ENCODE measurements at regions of chr1 and their contacts with region 1.

Region 1: GRCh38 chr1:61851849-61852669 is 109.8 kb downstream of the PATJ start:
- DNase-seq: no peak
- H3K4me3 ChIP-seq: no peak overlapping the region
- H3K27ac ChIP-seq: no peak overlapping the region
- H3K4me1 ChIP-seq: no peaks in the 10 kb centered on the region
- H3K27me3 ChIP-seq: no peaks in the 10 kb centered on the region
- CTCF ChIP-seq: peak; percentile 49 to 66 (median 51)
- EP300 ChIP-seq: no peak
- POLR2A ChIP-seq: no peak

Region 2: GRCh38 chr1:59971464-59971911 is 1880.6 kb before region 1 on chr1:
- intact Hi-C with region 1: loop called in 1 of 4 experiments (anchors 10 kb)
- DNase-seq: peak; percentile 42 to 76 (median 73)
- H3K4me3 ChIP-seq: no peak overlapping the region
- H3K27ac ChIP-seq: no peak overlapping the region
- H3K4me1 ChIP-seq: no peaks in the 10 kb centered on the region
- H3K27me3 ChIP-seq: no peaks in the 10 kb centered on the region
- CTCF ChIP-seq: peak; percentile 58 to 73 (median 70)
- EP300 ChIP-seq: no peak
- POLR2A ChIP-seq: no peak

Region 3: GRCh38 chr1:60969971-60970509 is 882.0 kb before region 1 on chr1:
- intact Hi-C with region 1: loop called in 3 of 4 experiments (anchors 5 to 10 kb)
- DNase-seq: no peak
- H3K4me3 ChIP-seq: no peak overlapping the region
- H3K27ac ChIP-seq: no peak overlapping the region
- H3K4me1 ChIP-seq: peaks cover 2% of the 10 kb centered on the region
- H3K27me3 ChIP-seq: no peaks in the 10 kb centered on the region
- CTCF ChIP-seq: peak in 2 of 3 donors; percentile 68 to 84
- EP300 ChIP-seq: no peak
- POLR2A ChIP-seq: no peak

Region 4: GRCh38 chr1:60978421-60979357 is 873.4 kb before region 1 on chr1:
- intact Hi-C with region 1: loop called in 2 of 4 experiments (anchors 5 to 10 kb)
- DNase-seq: peak in 2 of 5 donors; percentile 34 to 42
- H3K4me3 ChIP-seq: no peak overlapping the region
- H3K27ac ChIP-seq: no peak overlapping the region
- H3K4me1 ChIP-seq: peaks cover 7% of the 10 kb centered on the region
- H3K27me3 ChIP-seq: no peaks in the 10 kb centered on the region
- CTCF ChIP-seq: peak in 1 of 3 donors; percentile 22
- EP300 ChIP-seq: no peak
- POLR2A ChIP-seq: no peak

Region 5: GRCh38 chr1:61043010-61043820 is 808.8 kb before region 1 on chr1:
- intact Hi-C with region 1: loop called in 2 of 4 experiments (anchors 5 to 10 kb)
- DNase-seq: peak; percentile 84 to 93 (median 91)
- H3K4me3 ChIP-seq: peak overlapping the region; percentile 48
- H3K27ac ChIP-seq: peak overlapping the region in 1 of 2 donors; percentile 50
- H3K4me1 ChIP-seq: no peaks in the 10 kb centered on the region
- H3K27me3 ChIP-seq: no peaks in the 10 kb centered on the region
- CTCF ChIP-seq: peak; percentile 79 to 87 (median 86)
- EP300 ChIP-seq: no peak
- POLR2A ChIP-seq: peak; percentile 14

Region 6: GRCh38 chr1:61757945-61758344 is 94.1 kb before region 1 on chr1:
- intact Hi-C with region 1: no loop called
- DNase-seq: no peak
- H3K4me3 ChIP-seq: no peak overlapping the region
- H3K27ac ChIP-seq: no peak overlapping the region
- H3K4me1 ChIP-seq: peaks cover 3% of the 10 kb centered on the region
- H3K27me3 ChIP-seq: no peaks in the 10 kb centered on the region
- CTCF ChIP-seq: no peak
- EP300 ChIP-seq: no peak
- POLR2A ChIP-seq: no peak

Region 7: DNA sequence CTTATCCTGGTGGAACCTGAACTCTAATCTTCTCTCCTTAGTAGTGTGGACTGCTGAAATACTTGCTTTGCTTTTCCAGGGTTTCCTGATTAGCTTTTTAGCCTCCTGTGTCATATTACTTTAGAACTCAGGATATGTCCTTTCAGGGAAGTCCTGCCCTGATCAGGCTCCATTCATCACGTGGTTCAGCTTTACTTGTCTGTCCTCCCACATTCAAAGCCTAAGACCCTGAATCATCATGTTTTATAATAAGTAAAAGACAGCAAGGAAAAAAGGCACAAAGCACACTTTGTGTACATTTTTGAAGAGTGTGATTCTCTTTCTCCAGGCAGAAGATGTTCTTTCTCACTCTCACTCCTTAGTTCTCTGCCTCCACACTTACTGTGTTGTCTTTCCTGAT is 39.1 kb before region 1 on chr1:
- intact Hi-C with region 1: no loop called
- DNase-seq: no peak
- H3K4me3 ChIP-seq: no peak overlapping the region
- H3K27ac ChIP-seq: no peak overlapping the region
- H3K4me1 ChIP-seq: peaks cover 2% of the 10 kb centered on the region
- H3K27me3 ChIP-seq: no peaks in the 10 kb centered on the region
- CTCF ChIP-seq: no peak
- EP300 ChIP-seq: no peak
- POLR2A ChIP-seq: no peak

Region 8: GRCh38 chr1:61967750-61968149 is 115.7 kb after region 1 on chr1:
- intact Hi-C with region 1: no loop called
- DNase-seq: no peak
- H3K4me3 ChIP-seq: no peak overlapping the region
- H3K27ac ChIP-seq: no peak overlapping the region
- H3K4me1 ChIP-seq: no peaks in the 10 kb centered on the region
- H3K27me3 ChIP-seq: no peaks in the 10 kb centered on the region
- CTCF ChIP-seq: no peak
- EP300 ChIP-seq: no peak
- POLR2A ChIP-seq: no peak